GM10248 (cell line): ENCODE measurements at regions of chr2 and their contacts with region 1.

Region 1: DNA sequence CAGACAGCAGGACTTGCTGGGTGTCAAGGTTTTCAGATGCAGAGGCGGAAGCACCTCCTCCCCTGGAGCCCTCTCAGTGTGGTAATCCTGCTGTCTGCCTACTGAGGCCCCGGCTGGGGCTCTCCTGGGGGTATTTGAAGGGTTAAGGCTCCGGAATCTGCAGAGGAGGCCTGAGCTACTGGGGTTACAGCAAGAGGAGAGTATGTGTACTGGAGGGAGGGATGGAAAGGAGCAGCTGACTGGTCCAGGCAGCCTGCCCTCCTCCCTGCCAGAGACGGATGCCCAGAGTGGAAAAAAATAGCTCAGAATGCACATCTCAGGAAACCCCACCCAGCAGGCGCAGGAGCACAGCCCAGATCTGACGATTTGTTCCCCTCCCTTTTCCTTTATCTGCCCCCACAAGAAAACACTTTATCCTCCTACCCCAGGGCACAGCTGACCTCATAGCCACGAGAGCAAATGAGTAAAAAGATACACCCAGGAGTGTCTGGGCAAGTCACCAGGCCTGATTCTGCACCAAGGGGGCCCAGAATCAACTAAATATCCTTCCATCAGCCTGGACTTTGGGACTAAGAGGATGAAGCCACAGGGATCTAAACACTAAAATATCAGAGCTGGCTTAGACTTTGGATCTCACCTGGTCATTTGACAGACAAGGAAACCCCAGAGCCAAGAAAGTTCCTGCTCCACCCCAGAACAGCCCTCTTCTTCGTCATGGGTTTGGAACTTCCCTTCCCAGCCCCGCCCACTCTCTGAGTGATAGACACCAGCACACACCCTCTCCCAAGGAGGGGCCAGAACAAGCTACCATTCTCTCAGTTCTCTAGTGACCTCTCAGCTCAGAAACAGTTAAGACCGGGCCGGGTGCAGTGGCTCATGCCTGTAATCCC is 5.5 kb downstream of the TMBIM1 start:
- DNase-seq: peak; percentile 86
- CTCF ChIP-seq: no peak

Region 2: DNA sequence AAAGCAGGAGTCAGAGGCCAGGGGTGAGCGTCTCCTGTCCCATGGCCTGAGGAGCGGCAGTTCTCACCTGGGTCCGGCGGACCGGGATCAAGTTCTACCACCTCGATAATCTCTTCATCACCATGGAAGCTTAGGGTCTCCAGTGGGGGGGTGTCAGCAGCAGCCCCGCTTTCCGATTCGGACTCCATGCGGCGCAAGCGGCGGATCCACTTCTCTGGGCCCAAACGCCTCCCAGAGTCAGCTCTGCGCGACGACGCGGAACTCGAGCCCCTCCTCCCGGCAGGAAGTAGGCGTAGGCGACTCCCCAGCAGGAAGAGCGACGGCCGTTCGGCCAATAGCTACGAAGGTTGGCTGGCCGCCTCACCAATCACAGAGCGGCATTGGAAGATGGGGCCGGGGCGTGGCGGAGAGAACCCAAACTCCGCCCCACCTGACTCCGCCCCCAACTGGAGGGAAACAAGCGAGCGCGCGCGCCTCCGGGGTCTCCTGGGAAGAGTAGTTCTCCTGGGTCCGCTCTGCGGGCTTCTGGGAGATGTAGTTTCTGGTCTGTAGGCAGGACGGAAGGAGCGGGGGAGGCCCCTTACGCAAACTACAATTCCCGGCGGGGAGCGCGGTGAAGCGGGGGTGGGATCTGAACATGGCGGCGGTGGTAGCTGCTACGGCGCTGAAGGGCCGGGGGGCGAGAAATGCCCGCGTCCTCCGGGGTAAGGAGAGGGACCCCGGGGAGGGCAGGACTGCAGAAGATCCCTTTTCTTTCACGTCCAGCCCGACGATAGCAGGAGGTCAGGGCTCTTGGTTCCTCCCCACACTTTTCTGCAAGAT is 16.7 kb before region 1 on chr2 and contains the starts of genes AAMP and PNKD:
- CTCF ChIA-PET with region 1: interaction called, 115 read pairs
- POLR2A ChIA-PET with region 1: interaction called, 9 read pairs
- DNase-seq: peak; percentile 99
- CTCF ChIP-seq: no peak

Region 3: DNA sequence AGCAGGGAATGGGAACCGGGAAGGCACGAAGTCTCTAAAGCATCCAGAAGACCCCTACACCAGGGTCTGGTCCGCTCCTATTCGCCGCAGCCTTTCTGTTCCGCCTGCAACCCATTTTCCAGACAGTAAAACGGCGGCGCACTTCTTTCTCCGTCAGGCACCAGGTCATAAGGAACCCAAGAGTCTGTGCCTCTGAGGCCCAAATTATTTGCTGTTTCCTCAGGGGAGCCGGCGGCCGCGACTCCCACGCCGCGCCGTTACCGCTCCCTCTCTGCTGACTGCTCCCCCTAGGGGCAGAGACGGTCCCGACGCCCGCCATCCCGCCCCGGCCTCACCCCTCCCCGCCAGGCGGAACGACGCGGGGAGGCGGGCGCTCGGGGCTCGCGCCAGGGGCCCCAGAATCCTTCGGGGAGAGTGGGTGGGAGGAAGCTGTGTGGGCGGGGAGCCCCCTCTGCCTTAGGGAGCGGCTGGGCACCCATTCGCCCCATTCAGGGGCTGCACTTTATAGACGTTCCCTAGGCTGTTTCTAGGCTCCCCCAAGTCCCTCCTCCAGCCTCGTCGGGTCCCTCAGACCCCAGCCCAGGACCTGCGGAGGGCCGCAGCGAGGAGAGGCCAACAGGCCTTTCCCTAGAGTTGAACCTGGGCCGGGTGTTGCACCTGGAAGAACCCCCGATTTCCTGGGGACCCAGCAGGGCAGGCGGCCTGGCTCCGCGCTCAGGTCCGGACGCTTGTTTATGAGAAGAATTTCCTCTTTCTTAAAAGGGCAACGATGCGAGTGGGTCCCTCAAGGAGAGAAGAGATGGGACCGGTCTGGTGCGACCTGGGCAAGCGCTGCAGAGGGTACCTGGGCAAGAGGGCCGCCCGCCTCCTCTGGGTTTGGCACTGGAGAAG is 109.2 kb after region 1 on chr2:
- CTCF ChIA-PET with region 1: interaction called, 37 read pairs
- POLR2A ChIA-PET with region 1: no interaction called
- DNase-seq: peak; percentile 93
- CTCF ChIP-seq: peak; percentile 77